ENCODE measurements at regions of chr14 and their contacts with region 1.

Region 1: GRCh38 chr14:20613094-20614037 is 22.2 kb upstream of the RNASE12 start:
- DNase-seq: peak; percentile 98
- ATAC-seq: peak; percentile 76
- H3K4me3 ChIP-seq: peak overlapping the region; percentile 89
- H3K27ac ChIP-seq: peak overlapping the region; percentile 54; the same call in 1 of the 2 replicates
- H3K4me1 ChIP-seq: peaks cover 42% of the 10 kb centered on the region
- H3K27me3 ChIP-seq: no peaks in the 10 kb centered on the region
- CTCF ChIP-seq: peak; percentile 49 to 62 (median 56); a peak in 5 of 6 replicates
- EP300 ChIP-seq: no peak; a peak in 1 of 4 replicates
- POLR2A ChIP-seq: no peak
- RAD21 ChIP-seq: 0 out of 2 replicates have a peak, but pooled peaks have one; percentile 7

Region 2: DNA sequence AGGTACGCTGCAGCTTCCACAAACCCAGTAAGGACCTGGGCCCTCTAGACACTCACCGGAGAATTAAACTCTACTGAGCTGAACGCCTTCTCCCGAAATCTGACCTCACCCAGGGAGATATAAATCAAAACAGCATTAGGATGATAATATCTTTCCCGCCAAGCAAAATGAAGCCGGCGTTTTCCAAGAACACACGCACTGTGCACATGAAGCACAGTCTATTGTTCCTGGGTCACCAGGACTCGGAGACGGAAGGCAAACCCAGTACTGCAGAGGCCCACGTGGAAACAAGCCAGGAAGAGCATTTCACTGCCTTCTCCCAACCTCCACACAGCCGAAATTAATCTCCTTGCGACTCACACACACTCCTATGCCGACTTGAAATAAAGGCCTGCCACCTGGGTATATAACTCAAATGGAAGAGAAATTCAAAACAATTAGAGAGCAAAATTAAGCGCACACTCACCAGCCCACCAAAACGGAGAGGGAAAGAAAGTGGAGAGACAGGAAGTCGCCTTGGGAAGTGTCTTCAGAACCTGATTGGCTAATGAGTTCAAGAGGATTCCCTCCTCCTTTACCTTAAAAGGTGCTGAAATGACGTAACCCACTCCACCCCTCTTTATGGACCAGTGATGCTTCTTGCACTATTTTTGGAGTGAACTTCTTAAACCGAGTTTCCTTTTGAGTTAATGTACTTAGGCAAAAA is 280.4 kb before region 1 on chr14 and contains the start of gene CCNB1IP1:
- CTCF ChIA-PET with region 1: interaction called, 216 read pairs
- POLR2A ChIA-PET with region 1: no interaction called
- RAD21 ChIA-PET with region 1: interaction called, 77 read pairs
- SMC1A ChIA-PET with region 1: interaction called, 110 read pairs
- in situ Hi-C with region 1: loop called (anchors 5 kb)
- intact Hi-C with region 1: no loop called
- DNase-seq: peak; percentile 87
- ATAC-seq: peak; percentile 95
- H3K4me3 ChIP-seq: peak within 1 kb of the TSS; percentile 82
- H3K27ac ChIP-seq: peak within 1 kb of the TSS; percentile 85
- H3K4me1 ChIP-seq: peaks cover 6% of the 10 kb centered on the region; the same call in 1 of the 2 replicates
- H3K27me3 ChIP-seq: no peaks in the 10 kb centered on the region
- CTCF ChIP-seq: no peak
- EP300 ChIP-seq: no peak; a peak in 1 of 4 replicates
- POLR2A ChIP-seq: peak; percentile 56; the same call in 1 of the 2 replicates
- RAD21 ChIP-seq: no peak
- polyA plus RNA-seq, gene CCNB1IP1: 69.2 to 80.6 TPM

Region 3: DNA sequence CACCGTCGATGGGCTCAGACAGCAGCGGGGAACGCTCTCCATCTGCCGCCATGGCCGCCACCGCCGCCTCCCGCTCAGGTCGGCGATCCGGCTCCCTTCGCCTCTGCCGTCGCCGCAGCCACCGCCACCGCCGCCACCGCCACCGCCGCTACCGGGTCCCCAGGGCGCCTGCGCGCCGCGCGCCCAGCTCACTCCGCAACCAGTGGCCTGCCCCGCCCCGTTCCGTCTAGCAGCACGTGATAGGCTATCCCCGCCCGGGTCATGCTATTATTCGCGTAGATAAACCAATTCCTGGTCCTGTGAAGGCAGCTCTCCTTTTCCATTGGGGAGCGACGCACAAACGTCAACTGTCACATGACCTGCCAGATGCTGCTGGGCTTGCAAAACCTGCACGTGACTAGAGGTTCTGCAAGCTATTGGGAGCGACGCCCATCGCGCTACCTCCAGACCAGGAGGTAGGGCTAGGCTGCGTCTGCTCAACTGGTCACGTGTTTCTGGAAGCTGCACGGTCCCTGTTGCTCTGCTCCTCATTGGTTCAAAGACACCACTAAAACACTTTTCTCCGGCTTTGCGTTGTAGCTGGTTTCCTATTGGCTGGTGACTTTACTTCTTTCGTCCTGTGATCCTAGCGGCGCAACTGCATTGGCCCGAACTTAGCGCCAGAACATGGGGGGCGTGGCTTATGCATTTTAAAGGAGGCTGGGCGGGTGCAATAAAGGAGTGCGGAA is 151.9 kb before region 1 on chr14 and contains the start of gene PIP4P1:
- CTCF ChIA-PET with region 1: interaction called, 4 read pairs
- POLR2A ChIA-PET with region 1: no interaction called
- RAD21 ChIA-PET with region 1: interaction called, 7 read pairs
- SMC1A ChIA-PET with region 1: no interaction called
- in situ Hi-C with region 1: no loop called
- intact Hi-C with region 1: loop called (anchors 1 kb)
- DNase-seq: peak; percentile 100
- ATAC-seq: peak; percentile 96
- H3K4me3 ChIP-seq: peak within 1 kb of the TSS; percentile 73
- H3K27ac ChIP-seq: peak within 1 kb of the TSS; percentile 87
- H3K4me1 ChIP-seq: peaks cover 6% of the 10 kb centered on the region
- H3K27me3 ChIP-seq: no peaks in the 10 kb centered on the region
- CTCF ChIP-seq: no peak
- EP300 ChIP-seq: no peak
- POLR2A ChIP-seq: peak; percentile 78
- RAD21 ChIP-seq: no peak
- polyA plus RNA-seq, gene PIP4P1: 19.1 to 41.6 TPM

Region 4: GRCh38 chr14:20530771-20531571 is 82.4 kb before region 1 on chr14:
- CTCF ChIA-PET with region 1: interaction called, 25 read pairs
- POLR2A ChIA-PET with region 1: interaction called, 3 read pairs
- RAD21 ChIA-PET with region 1: interaction called, 3 read pairs
- SMC1A ChIA-PET with region 1: interaction called, 14 read pairs
- in situ Hi-C with region 1: no loop called
- intact Hi-C with region 1: loop called (anchors 1 kb)
- DNase-seq: peak; percentile 21
- ATAC-seq: peak; percentile 98
- H3K4me3 ChIP-seq: no peak overlapping the region
- H3K27ac ChIP-seq: no peak overlapping the region
- H3K4me1 ChIP-seq: no peaks in the 10 kb centered on the region
- H3K27me3 ChIP-seq: no peaks in the 10 kb centered on the region
- CTCF ChIP-seq: peak; percentile 65 to 75 (median 73)
- EP300 ChIP-seq: no peak
- POLR2A ChIP-seq: no peak
- RAD21 ChIP-seq: peak; percentile 66

Region 5: DNA sequence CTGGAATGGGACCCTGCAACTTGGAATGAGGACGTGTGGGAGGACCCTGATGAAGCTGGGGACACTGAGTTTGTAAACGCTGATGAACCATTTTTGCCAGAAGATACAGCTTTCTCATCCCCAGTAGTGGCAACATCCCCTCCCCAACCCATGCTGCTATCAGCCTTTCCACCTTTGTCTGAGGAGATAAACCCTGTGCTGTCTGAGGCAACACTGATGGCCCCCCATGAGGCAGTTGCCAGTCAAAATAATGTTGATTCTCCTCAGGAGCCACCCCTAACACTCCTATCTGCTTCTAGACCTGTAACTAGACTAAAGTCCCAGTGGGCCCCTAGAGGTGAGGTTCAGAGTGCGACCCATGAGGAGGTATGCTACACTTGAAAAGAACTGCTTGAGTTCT is 45.0 kb before region 1 on chr14:
- CTCF ChIA-PET with region 1: no interaction called
- POLR2A ChIA-PET with region 1: no interaction called
- RAD21 ChIA-PET with region 1: no interaction called
- SMC1A ChIA-PET with region 1: no interaction called
- in situ Hi-C with region 1: no loop called
- intact Hi-C with region 1: no loop called
- DNase-seq: no peak
- ATAC-seq: no peak
- H3K4me3 ChIP-seq: no peak overlapping the region
- H3K27ac ChIP-seq: no peak overlapping the region
- H3K4me1 ChIP-seq: no peaks in the 10 kb centered on the region
- H3K27me3 ChIP-seq: no peaks in the 10 kb centered on the region
- CTCF ChIP-seq: no peak
- EP300 ChIP-seq: no peak
- POLR2A ChIP-seq: no peak
- RAD21 ChIP-seq: no peak

Region 6: GRCh38 chr14:20591241-20591640 is 22.1 kb before region 1 on chr14 and contains the start of gene RNASE12:
- CTCF ChIA-PET with region 1: no interaction called
- POLR2A ChIA-PET with region 1: no interaction called
- RAD21 ChIA-PET with region 1: no interaction called
- SMC1A ChIA-PET with region 1: no interaction called
- in situ Hi-C with region 1: no loop called
- intact Hi-C with region 1: no loop called
- DNase-seq: no peak
- ATAC-seq: no peak
- H3K4me3 ChIP-seq: no peak within 1 kb of the TSS
- H3K27ac ChIP-seq: no peak within 1 kb of the TSS
- H3K4me1 ChIP-seq: no peaks in the 10 kb centered on the region
- H3K27me3 ChIP-seq: no peaks in the 10 kb centered on the region
- CTCF ChIP-seq: no peak
- EP300 ChIP-seq: no peak
- POLR2A ChIP-seq: no peak
- RAD21 ChIP-seq: no peak
- polyA plus RNA-seq, gene RNASE12: not detected

Region 7: GRCh38 chr14:20632682-20633428 is 19.5 kb after region 1 on chr14:
- CTCF ChIA-PET with region 1: interaction called, 19 read pairs
- POLR2A ChIA-PET with region 1: interaction called, 8 read pairs
- RAD21 ChIA-PET with region 1: interaction called, 19 read pairs
- SMC1A ChIA-PET with region 1: interaction called, 25 read pairs
- in situ Hi-C with region 1: no loop called
- intact Hi-C with region 1: loop called (anchors 1 kb)
- DNase-seq: peak; percentile 76
- ATAC-seq: peak; percentile 77
- H3K4me3 ChIP-seq: peak overlapping the region; percentile 88; the same call in 1 of the 2 replicates
- H3K27ac ChIP-seq: no peak overlapping the region
- H3K4me1 ChIP-seq: peaks cover 7% of the 10 kb centered on the region; the same call in 1 of the 2 replicates
- H3K27me3 ChIP-seq: peaks cover 0 to 2% of the 10 kb centered on the region in 2 experiments; a peak in 1 of 4 replicates
- CTCF ChIP-seq: no peak
- EP300 ChIP-seq: peak in 1 of 2 experiments; percentile 44; a peak in 1 of 4 replicates
- POLR2A ChIP-seq: no peak
- RAD21 ChIP-seq: no peak

Region 8: GRCh38 chr14:20682435-20683124 is 69.2 kb after region 1 on chr14:
- CTCF ChIA-PET with region 1: interaction called, 163 read pairs
- POLR2A ChIA-PET with region 1: interaction called, 19 read pairs
- RAD21 ChIA-PET with region 1: interaction called, 49 read pairs
- SMC1A ChIA-PET with region 1: interaction called, 38 read pairs
- in situ Hi-C with region 1: no loop called
- intact Hi-C with region 1: loop called (anchors 1 kb)
- DNase-seq: no peak
- ATAC-seq: peak; percentile 74
- H3K4me3 ChIP-seq: peak overlapping the region; percentile 73
- H3K27ac ChIP-seq: peak overlapping the region; percentile 99
- H3K4me1 ChIP-seq: peaks cover 23% of the 10 kb centered on the region
- H3K27me3 ChIP-seq: no peaks in the 10 kb centered on the region
- CTCF ChIP-seq: no peak
- EP300 ChIP-seq: no peak
- POLR2A ChIP-seq: peak; percentile 87
- RAD21 ChIP-seq: no peak

Region 9: GRCh38 chr14:20922474-20922873 is 309.1 kb after region 1 on chr14:
- CTCF ChIA-PET with region 1: no interaction called
- POLR2A ChIA-PET with region 1: no interaction called
- RAD21 ChIA-PET with region 1: no interaction called
- SMC1A ChIA-PET with region 1: no interaction called
- in situ Hi-C with region 1: no loop called
- intact Hi-C with region 1: no loop called
- DNase-seq: no peak
- ATAC-seq: no peak
- H3K4me3 ChIP-seq: no peak overlapping the region
- H3K27ac ChIP-seq: no peak overlapping the region
- H3K4me1 ChIP-seq: no peaks in the 10 kb centered on the region
- H3K27me3 ChIP-seq: no peaks in the 10 kb centered on the region; a peak in 1 of 4 replicates
- CTCF ChIP-seq: no peak
- EP300 ChIP-seq: no peak
- POLR2A ChIP-seq: no peak
- RAD21 ChIP-seq: no peak

Measured in GM12878 (cell line).